ENCODE measurements at regions of chr6 and their contacts with region 1.

Region 1: DNA sequence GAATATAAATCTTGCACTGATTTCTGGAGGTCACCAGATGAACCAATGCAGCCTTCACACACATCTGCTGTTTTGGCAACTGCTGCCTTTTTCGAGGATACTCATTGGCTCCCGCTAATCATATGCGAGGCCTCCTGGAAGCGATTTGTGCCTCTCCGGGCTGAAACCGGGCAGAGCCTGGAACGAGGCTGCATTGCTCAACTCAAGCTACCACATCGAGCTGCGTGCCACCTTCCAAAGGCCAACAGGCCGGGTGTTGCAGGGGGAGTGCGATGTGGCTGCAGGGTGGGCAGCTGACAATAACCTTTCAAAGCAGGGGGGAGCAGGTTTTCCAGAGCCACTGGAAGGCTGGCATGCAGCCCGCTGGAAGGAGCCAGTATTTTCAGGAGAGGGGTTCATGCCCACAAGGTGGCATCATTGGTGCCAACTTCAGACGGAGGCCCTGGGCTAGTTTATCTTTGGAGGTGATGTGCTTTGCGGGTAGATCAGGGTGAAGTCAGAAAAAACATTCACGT is 122.6 kb upstream of the IFNGR1 start:
- DNase-seq: peak; percentile 19 to 81 (median 51)
- ATAC-seq: peak; percentile 62
- H3K4me3 ChIP-seq: no peak overlapping the region
- H3K4me3 Mint-ChIP-seq: peak overlapping the region; percentile 38
- H3K27ac ChIP-seq: no peak overlapping the region
- H3K27ac Mint-ChIP-seq: no peak overlapping the region
- H3K4me1 ChIP-seq: peaks cover 6% of the 10 kb centered on the region
- H3K4me1 Mint-ChIP-seq: peaks cover 19% of the 10 kb centered on the region
- H3K27me3 ChIP-seq: no peaks in the 10 kb centered on the region
- H3K27me3 Mint-ChIP-seq: no peaks in the 10 kb centered on the region
- CTCF ChIP-seq: peak; percentile 44

Region 2: GRCh38 chr6:137271245-137272183 is 70.2 kb before region 1 on chr6:
- CTCF ChIA-PET with region 1: interaction called, 6 read pairs
- POLR2A ChIA-PET with region 1: no interaction called
- intact Hi-C with region 1: loop called in 1 of 2 experiments (anchors 2 kb)
- DNase-seq: peak in 2 of 9 experiments; percentile 56 to 66
- ATAC-seq: peak; percentile 69
- H3K4me3 ChIP-seq: no peak overlapping the region
- H3K4me3 Mint-ChIP-seq: no peak overlapping the region
- H3K27ac ChIP-seq: no peak overlapping the region
- H3K27ac Mint-ChIP-seq: no peak overlapping the region
- H3K4me1 ChIP-seq: no peaks in the 10 kb centered on the region
- H3K4me1 Mint-ChIP-seq: peaks cover 17% of the 10 kb centered on the region
- H3K27me3 ChIP-seq: no peaks in the 10 kb centered on the region
- H3K27me3 Mint-ChIP-seq: peaks cover 2% of the 10 kb centered on the region
- CTCF ChIP-seq: peak; percentile 95

Region 3: GRCh38 chr6:137389150-137389704 is 47.5 kb after region 1 on chr6:
- CTCF ChIA-PET with region 1: interaction called, 17 read pairs
- POLR2A ChIA-PET with region 1: interaction called, 4 read pairs
- intact Hi-C with region 1: no loop called
- DNase-seq: peak; percentile 12 to 91 (median 75)
- ATAC-seq: peak; percentile 96
- H3K4me3 ChIP-seq: no peak overlapping the region
- H3K4me3 Mint-ChIP-seq: peak overlapping the region; percentile 67
- H3K27ac ChIP-seq: peak overlapping the region; percentile 4 to 79
- H3K27ac Mint-ChIP-seq: peak overlapping the region; percentile 84
- H3K4me1 ChIP-seq: peaks cover 35% of the 10 kb centered on the region
- H3K4me1 Mint-ChIP-seq: peaks cover 74% of the 10 kb centered on the region
- H3K27me3 ChIP-seq: no peaks in the 10 kb centered on the region
- H3K27me3 Mint-ChIP-seq: no peaks in the 10 kb centered on the region
- CTCF ChIP-seq: no peak

Region 4: DNA sequence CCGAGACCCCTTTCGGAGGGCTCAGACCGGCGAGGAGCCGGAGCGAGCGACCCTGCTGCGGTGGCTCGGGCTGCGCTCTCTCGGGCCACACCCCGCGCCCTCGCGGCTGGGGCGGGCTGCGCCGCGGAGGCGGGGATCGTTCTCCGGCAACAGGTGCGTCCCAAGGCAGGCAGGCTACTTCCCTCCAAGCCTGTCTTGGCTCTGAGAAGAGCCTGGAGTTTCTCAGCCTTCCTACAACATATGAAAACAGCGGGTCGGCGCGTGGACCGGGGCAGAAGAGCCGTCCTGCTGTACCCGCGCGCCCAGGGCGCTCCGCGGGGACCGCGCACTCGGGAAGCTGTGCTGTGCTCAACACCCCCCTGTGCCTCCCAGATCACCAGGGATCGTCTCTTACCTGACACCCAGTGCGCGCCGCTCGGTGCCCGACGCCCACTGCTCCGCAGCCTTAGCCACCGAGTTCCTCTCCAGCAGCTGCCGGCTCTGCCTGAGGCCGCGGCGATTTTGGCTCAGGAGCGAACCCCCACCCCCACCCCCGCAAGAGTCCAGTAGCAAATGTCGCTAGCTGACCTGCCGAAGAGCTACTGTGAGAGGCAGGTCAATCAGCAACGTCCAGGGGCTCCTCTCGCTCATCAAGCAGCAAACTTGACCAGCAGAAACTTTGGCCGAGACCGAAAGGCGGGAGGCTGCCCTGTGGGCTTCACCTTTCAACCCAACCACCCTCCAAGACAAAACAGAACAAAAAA is 156.2 kb after region 1 on chr6:
- CTCF ChIA-PET with region 1: interaction called, 5 read pairs
- POLR2A ChIA-PET with region 1: no interaction called
- intact Hi-C with region 1: loop called in 1 of 2 experiments (anchors 10 kb)
- DNase-seq: peak in 4 of 9 experiments; percentile 16 to 60 (median 33)
- ATAC-seq: peak; percentile 59
- H3K4me3 ChIP-seq: peak overlapping the region in 1 of 2 experiments; percentile 40
- H3K4me3 Mint-ChIP-seq: peak overlapping the region; percentile 56
- H3K27ac ChIP-seq: no peak overlapping the region
- H3K27ac Mint-ChIP-seq: no peak overlapping the region
- H3K4me1 ChIP-seq: peaks cover 51% of the 10 kb centered on the region
- H3K4me1 Mint-ChIP-seq: peaks cover 42% of the 10 kb centered on the region
- H3K27me3 ChIP-seq: peaks cover 53 to 72% of the 10 kb centered on the region in 2 experiments
- H3K27me3 Mint-ChIP-seq: peaks cover 65% of the 10 kb centered on the region
- CTCF ChIP-seq: no peak

Region 5: GRCh38 chr6:137641474-137642077 is 299.8 kb after region 1 on chr6:
- CTCF ChIA-PET with region 1: interaction called, 12 read pairs
- POLR2A ChIA-PET with region 1: no interaction called
- intact Hi-C with region 1: loop called (anchors 1 kb)
- DNase-seq: peak; percentile 41 to 83 (median 64)
- ATAC-seq: peak; percentile 74
- H3K4me3 ChIP-seq: no peak overlapping the region
- H3K4me3 Mint-ChIP-seq: no peak overlapping the region
- H3K27ac ChIP-seq: no peak overlapping the region
- H3K27ac Mint-ChIP-seq: no peak overlapping the region
- H3K4me1 ChIP-seq: no peaks in the 10 kb centered on the region
- H3K4me1 Mint-ChIP-seq: peaks cover 13% of the 10 kb centered on the region
- H3K27me3 ChIP-seq: no peaks in the 10 kb centered on the region
- H3K27me3 Mint-ChIP-seq: peaks cover 2% of the 10 kb centered on the region
- CTCF ChIP-seq: peak; percentile 77